ENCODE measurements at regions of chr12 and their contacts with region 1.

Region 1: DNA sequence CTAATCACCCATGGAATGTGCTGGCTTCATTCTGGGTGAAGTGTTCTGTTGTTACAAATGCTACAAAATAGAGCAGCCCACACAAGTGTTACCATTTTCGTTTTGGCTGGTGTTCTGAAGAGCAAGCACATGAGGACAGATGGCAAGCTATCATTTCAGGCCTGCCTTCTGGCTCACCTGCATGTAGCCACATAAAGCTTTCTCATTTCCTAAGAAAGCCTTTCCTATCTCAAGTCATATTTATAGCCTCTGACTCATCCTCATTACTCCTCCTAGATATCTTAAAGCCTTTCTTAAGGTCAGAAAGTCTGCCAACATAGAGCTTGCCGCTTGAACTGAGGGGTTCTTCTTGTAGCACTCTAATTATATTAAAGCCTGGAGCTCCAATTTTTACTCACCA is 89.0 kb downstream of the PTPRR start:
- DNase-seq: no peak
- H3K4me3 ChIP-seq: no peak overlapping the region
- CTCF ChIP-seq: no peak

Region 2: DNA sequence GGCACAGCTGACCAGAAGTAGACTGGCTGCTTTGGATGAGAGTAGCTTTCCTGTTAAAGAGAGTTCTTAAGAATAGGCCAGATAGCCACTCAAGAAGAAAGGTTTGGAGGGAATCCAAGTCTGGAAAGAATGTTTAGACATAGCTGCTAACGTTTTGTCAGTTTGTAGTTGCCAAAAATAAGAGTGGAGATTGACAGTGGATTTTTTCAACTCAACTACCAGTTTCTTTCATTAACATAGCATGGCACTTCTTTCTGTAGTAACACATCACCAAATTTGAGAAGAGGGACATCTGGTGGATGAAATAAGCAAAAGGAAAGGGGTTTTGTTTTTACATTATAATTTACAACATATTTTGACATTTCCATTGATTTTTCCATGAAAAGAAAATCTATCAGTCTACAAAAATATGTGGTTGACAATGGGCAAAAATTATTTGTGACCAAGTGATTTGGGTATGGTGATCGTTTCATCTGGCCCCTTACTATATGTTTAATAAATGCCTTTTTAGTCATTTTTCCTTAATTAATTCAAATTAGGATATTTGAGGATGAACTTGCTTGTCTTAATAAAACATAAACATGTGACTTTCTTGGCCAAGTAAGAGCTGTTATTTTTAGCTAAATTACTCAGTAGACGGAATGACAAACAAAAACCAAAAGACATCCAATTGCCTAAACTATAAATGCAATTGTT is 17.9 kb after region 1 on chr12:
- CTCF ChIA-PET with region 1: interaction called, 13 read pairs
- POLR2A ChIA-PET with region 1: no interaction called
- DNase-seq: no peak
- H3K4me3 ChIP-seq: no peak overlapping the region
- CTCF ChIP-seq: peak; percentile 31

Region 3: DNA sequence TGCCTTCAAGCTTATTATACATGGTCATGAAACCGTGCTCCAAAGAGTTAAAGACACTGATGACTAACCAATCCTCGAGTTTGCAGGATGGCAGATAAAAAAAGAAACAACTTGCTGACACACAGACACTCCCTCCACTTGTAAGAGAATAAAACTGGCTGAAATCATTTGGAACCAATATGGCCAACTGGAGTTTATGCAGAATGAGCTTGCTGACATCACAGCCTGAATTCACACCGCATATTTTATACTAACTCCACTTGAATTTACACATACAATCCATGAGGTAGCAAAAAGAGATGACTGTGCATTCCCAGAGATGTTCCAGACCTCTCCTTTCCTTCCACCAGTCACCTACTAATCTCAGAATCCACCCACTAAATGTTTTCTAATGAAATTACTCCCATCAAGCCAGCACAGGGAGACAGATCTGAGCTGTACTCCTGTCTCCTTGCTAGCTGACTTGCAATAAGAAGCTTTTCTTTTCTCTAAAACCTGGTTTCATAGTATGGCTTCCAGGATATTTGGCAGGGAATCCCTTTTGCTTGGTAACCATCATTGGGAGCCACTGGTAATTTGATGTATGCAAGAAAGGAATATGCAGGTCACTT is 104.8 kb after region 1 on chr12:
- CTCF ChIA-PET with region 1: no interaction called
- POLR2A ChIA-PET with region 1: no interaction called
- DNase-seq: no peak
- H3K4me3 ChIP-seq: no peak overlapping the region
- CTCF ChIP-seq: no peak